ENCODE measurements at regions of chr19 and their contacts with region 1.

Region 1: DNA sequence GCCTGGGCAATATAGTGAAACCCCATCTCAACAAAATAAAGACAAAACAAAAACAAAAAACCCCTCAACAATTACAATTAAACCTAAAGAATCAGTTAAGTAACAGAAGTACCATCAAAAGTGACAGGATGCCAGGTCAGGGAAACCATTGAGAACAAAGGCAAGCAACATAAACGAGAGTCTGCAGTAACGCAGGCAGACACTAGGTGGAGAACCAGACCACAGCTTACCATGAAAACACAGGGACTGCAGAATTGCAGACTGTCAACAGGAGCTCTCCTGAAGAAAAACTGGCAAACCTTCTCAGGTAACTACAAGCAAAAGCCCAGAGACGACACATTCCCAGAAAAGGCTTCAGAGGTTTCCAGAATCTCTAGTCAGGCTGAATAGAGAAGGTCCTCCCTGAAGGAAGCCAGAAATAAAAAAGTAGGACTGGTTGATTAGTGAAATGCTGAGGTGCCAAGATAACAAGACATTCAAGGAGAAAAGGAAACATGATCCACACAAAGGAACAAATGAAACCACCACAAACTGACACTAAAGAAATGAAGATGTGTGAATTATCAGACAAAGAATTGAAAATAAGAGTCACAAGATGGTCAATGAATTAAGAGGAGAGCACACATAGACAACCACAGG is 2.2 kb upstream of the ZNF665 start:
- DNase-seq: peak; percentile 91
- H3K4me3 Mint-ChIP-seq: peak overlapping the region; percentile 13
- H3K27ac Mint-ChIP-seq: peak overlapping the region; percentile 9
- H3K4me1 Mint-ChIP-seq: peaks cover 30% of the 10 kb centered on the region
- H3K27me3 Mint-ChIP-seq: no peaks in the 10 kb centered on the region

Region 2: GRCh38 chr19:52942386-52943133 is 252.8 kb before region 1 on chr19:
- intact Hi-C with region 1: loop called (anchors 10 kb)
- DNase-seq: peak; percentile 99
- H3K4me3 Mint-ChIP-seq: peak overlapping the region; percentile 90
- H3K27ac Mint-ChIP-seq: peak overlapping the region; percentile 88
- H3K4me1 Mint-ChIP-seq: peaks cover 19% of the 10 kb centered on the region
- H3K27me3 Mint-ChIP-seq: no peaks in the 10 kb centered on the region

Region 3: DNA sequence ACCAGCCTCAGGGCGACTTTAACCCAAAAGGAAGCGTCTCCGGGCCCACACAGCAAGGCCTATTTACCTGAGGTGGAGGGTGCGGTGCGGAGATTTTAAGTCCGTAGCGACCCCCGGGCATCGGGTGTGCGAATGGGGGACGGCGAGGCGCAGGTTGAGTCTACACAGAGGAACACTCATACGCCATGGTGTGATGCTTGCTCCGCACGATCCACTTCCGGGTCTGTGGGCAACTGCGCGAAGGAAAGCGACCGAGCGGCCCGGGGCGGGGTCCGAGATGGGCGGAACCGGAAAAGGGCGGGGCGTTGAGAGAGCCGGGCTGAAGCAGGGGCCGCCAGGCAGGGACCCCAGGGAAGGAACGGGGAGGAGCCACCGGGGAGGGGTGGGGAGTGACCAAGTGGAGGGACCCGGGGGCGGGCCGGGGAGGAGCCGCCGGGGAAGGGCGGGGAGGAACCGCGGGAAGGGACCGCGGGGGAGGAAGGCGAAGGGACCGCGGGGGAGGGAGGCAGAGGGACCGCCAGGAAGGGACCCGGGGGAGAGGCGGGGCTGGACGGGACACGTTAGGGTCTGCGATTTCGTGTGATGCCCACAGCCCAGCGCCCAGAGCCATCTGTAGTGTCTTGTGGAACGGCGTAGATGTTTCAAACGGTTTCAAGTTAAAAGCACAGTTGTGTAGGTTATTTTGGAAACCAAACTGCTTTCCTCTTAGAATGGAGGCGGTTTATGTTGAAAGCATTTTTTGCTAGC is 92.0 kb before region 1 on chr19 and contains the start of gene ZNF160:
- intact Hi-C with region 1: loop called (anchors 5 kb)
- DNase-seq: peak; percentile 100
- H3K4me3 Mint-ChIP-seq: peak within 1 kb of the TSS; percentile 93
- H3K27ac Mint-ChIP-seq: peak within 1 kb of the TSS; percentile 90
- H3K4me1 Mint-ChIP-seq: peaks cover 19% of the 10 kb centered on the region
- H3K27me3 Mint-ChIP-seq: no peaks in the 10 kb centered on the region
- total RNA-seq, gene ZNF160: 30.6 and 37.5 TPM in 2 replicates

Region 4: DNA sequence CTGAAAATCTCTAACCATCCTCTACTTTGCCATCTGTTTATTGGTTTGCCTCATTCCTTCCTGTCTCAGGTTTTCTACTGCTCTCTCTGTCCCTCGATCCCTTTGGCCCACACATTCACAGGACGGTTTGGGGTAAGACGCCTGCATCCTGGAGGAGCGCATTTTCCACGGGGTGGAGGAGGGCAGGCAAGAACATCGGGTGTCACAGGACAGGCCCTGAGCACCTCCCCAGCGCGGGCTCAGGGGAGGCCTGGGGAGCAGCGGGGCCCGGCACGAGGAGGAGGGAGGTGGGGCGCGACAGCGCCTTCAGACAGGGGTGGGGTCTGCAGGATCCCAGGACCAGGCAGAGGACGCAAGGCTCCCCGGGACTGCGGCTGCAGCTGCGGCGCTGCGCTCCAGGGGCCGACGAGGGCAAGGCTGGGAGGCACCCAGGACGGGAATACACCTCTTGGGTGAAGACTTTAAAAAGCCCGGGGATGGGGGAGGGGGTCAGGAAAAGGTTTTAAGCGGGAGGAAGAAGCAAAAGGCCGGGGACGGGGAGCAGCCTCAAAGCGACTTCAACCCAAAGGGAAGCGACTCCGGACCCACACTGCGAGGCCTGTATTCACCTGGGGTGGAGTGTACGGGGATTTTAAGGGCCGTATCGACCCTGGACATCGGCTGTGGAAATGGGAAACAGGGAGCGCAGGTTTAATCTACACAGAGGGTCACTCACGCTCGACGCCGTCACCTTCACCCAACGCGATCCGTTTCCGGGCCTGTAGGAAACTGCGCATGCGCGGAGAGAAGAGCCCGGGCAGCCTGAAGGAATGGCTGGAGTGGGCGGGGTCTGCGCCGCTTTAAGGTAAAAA is 63.0 kb before region 1 on chr19 and contains the start of gene ZNF415:
- intact Hi-C with region 1: no loop called
- DNase-seq: peak; percentile 80
- H3K4me3 Mint-ChIP-seq: peak within 1 kb of the TSS; percentile 69
- H3K27ac Mint-ChIP-seq: no peak within 1 kb of the TSS
- H3K4me1 Mint-ChIP-seq: peaks cover 6% of the 10 kb centered on the region
- H3K27me3 Mint-ChIP-seq: no peaks in the 10 kb centered on the region
- total RNA-seq, gene ZNF415: 0.51 and 0.78 TPM in 2 replicates

Region 5: GRCh38 chr19:53147645-53148044 is 47.7 kb before region 1 on chr19:
- intact Hi-C with region 1: no loop called
- DNase-seq: no peak
- H3K4me3 Mint-ChIP-seq: no peak overlapping the region
- H3K27ac Mint-ChIP-seq: no peak overlapping the region
- H3K4me1 Mint-ChIP-seq: no peaks in the 10 kb centered on the region
- H3K27me3 Mint-ChIP-seq: no peaks in the 10 kb centered on the region

Region 6: GRCh38 chr19:53183146-53183764 is 12.1 kb before region 1 on chr19:
- intact Hi-C with region 1: no loop called
- DNase-seq: no peak
- H3K4me3 Mint-ChIP-seq: no peak overlapping the region
- H3K27ac Mint-ChIP-seq: no peak overlapping the region
- H3K4me1 Mint-ChIP-seq: no peaks in the 10 kb centered on the region
- H3K27me3 Mint-ChIP-seq: no peaks in the 10 kb centered on the region

Region 7: GRCh38 chr19:53333463-53334449 is 138.4 kb after region 1 on chr19 and contains the start of gene ZNF845:
- intact Hi-C with region 1: loop called (anchors 1 kb)
- DNase-seq: peak; percentile 99
- H3K4me3 Mint-ChIP-seq: peak within 1 kb of the TSS; percentile 89
- H3K27ac Mint-ChIP-seq: peak within 1 kb of the TSS; percentile 88
- H3K4me1 Mint-ChIP-seq: peaks cover 11% of the 10 kb centered on the region
- H3K27me3 Mint-ChIP-seq: no peaks in the 10 kb centered on the region
- total RNA-seq, gene ZNF845: 6.1 and 6.4 TPM in 2 replicates

Region 8: DNA sequence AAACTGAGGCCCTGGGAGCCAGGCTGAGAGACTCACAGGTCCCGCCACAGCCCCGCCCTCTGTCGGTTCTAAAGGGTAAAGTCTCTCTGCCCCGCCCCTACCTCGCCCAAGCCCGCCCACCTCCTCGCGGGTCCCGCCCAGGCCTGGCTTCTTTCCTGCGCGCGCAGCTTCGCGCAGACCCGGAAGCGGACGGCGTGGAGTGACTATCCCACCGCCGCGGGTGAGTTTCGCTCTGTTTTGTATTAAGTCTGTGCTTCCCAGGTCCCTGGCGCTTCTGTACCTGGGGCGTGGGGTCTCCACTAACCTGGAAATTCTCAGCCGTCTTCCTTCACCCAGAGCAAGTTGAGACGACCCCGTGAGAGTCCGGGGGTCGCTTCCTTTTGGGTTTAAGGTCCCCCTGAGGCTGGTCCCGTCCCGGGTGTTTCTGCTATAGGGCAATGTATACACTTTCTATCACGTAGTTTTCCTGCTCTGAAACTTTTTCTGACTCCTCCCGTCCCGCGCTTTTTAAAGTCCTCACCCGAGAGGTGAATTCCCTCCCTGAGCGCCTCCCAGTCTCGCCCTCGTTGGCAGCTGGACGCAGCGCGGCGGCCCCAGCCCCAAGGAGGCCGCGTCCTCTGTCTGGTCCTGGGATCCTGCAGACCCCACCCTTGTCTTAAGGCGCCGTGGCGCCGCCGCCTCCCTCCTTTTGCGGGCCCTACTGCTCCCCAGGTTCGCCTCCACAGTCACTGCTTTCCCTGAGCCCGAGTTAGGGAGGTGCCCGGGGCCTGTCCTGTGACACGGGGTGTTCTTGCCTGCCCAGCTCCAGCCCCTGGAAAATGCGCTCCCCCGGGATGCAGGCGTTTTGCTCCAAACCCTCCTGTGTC is 199.8 kb after region 1 on chr19 and contains the start of gene ZNF765:
- intact Hi-C with region 1: loop called (anchors 10 kb)
- DNase-seq: peak; percentile 99
- H3K4me3 Mint-ChIP-seq: peak within 1 kb of the TSS; percentile 94
- H3K27ac Mint-ChIP-seq: peak within 1 kb of the TSS; percentile 93
- H3K4me1 Mint-ChIP-seq: peaks cover 16% of the 10 kb centered on the region
- H3K27me3 Mint-ChIP-seq: no peaks in the 10 kb centered on the region
- total RNA-seq, gene ZNF765: 11.0 and 11.8 TPM in 2 replicates

Region 9: DNA sequence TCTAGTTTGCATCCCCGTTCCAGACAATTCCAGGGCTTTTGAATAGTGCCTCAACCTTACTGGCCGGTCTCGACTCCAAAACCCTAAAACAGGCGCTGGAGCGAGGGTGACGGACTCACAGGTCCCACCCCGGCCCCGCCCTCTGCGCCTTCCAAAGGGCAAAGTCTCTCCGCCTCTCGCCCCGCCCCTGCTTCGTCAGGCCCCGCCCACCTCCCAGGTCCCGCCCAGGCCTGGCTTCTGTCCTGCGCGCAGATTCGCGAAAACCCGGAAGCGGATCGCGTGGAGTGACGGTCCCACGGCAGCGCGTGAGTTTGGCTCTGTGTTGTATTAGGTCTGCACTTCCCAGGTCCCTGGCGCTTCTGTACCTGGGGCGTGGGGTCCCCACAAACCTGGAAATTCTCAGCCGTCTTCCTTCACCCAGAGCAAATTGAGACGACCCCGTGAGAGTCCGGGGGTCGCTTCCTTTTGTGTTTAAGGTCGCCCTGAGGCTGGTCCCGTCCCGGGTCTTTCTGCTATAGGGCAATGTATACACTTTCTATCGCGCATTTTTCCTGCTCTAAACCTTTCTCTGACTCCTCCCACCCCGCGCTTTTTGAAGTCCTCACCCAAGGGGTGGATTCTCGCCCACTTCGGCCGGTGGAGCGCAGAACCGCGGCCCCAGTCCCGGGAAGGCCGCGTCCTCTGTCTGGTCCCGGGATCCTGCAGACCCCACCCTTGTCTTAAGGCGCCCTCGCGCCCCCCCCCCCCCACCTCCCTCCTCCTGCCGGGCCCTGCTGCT is 272.3 kb after region 1 on chr19 and contains the start of gene ZNF813:
- intact Hi-C with region 1: loop called (anchors 1 kb)
- DNase-seq: peak; percentile 98
- H3K4me3 Mint-ChIP-seq: peak within 1 kb of the TSS; percentile 92
- H3K27ac Mint-ChIP-seq: peak within 1 kb of the TSS; percentile 87
- H3K4me1 Mint-ChIP-seq: peaks cover 16% of the 10 kb centered on the region
- H3K27me3 Mint-ChIP-seq: peaks cover 2% of the 10 kb centered on the region
- total RNA-seq, gene ZNF813: 4.3 and 5.2 TPM in 2 replicates

Region 10: DNA sequence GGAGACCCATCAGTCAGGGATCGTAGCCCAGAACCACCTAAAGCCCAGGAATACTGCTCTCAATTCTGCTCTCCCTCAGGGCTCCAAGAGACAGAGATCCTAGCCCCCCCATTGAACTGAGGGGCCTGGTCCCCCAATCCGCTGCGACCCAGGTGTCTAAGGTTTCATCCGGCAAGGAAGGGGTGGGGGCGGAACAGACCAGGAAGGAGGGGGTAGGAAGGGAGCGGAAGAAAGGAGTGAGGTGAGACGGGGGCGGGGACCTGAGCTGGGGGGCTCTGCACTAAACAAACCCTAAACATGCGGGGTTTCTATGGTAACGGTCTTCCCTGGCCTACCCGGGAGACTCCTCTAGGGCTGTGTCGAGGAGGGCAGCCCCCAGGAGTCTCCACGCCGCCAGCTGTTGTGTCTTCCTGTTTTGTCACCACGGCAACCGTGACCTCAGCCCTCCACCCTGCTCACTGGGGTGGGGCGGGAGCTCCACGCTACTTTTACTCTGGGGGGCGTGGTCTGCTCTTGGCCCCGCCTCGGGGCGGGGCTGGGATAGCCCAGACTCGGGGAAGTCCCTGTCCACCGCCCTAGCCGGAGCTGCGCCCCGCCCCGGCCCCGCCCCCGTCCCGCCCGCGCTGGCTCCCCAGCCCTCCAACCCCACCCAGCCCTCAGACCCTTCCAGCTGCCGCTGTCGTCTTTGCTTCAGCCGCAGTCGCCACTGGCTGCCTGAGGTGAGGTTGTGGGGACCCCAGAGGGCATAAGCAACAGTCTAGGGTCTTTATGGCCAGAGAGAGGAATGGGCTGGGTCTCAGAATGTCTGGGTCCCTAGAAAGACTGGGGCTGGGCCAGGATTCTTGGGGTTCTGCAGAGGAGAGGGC is 672.1 kb after region 1 on chr19 and contains the start of gene MYADM:
- intact Hi-C with region 1: loop called (anchors 5 kb)
- DNase-seq: peak; percentile 100
- H3K4me3 Mint-ChIP-seq: peak within 1 kb of the TSS; percentile 99
- H3K27ac Mint-ChIP-seq: peak within 1 kb of the TSS; percentile 98
- H3K4me1 Mint-ChIP-seq: peaks cover 38% of the 10 kb centered on the region
- H3K27me3 Mint-ChIP-seq: peaks cover 3% of the 10 kb centered on the region
- total RNA-seq, gene MYADM: 65.6 and 69.0 TPM in 2 replicates

Measured in activated CD4-positive, alpha-beta T cell treated with anti-CD3 and anti-CD28 coated beads, Interleukin-2, amount 10 ng/mL, durations not matched to agents 24 days and 14 days (primary cell).